Heart left ventricle (tissue), 16 donors: ENCODE measurements at regions of chr13 and their contacts with region 1.

Region 1: DNA sequence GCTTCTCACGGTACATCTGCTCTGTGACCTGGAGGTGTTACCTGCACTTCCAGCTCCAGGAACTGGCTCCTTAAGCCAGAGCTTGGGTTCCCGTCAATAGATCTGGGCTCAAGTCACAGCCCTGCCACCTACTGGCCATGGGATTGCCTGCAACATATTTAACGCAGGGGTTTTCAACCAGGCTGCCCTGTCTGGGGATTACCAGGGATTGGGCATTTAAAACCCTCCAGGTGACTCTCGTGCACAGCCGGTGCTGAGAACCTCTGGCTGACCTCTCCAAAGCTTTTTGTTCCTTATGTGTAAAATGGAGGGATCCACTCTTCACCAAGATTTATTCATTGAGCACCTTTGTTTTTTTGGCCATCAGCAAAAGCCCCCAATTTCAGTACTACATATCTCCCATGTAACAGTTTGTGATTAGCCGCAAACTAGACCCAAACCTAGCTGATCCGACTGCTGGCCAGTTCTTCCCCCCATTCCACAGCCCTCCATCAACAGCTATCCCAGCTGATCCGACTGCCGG is 76.6 kb upstream of the STK24 start:
- DNase-seq: peak; percentile 69 to 79 (median 73)
- ATAC-seq: peak; percentile 71 to 94 (median 88)
- H3K4me3 ChIP-seq: no peak overlapping the region
- H3K27ac ChIP-seq: no peak overlapping the region
- H3K4me1 ChIP-seq: peaks cover 0 to 13% (median 0%) of the 10 kb centered on the region in 12 donors
- H3K27me3 ChIP-seq: no peaks in the 10 kb centered on the region
- CTCF ChIP-seq: peak; percentile 82 to 93 (median 89)
- POLR2A ChIP-seq: no peak

Region 2: DNA sequence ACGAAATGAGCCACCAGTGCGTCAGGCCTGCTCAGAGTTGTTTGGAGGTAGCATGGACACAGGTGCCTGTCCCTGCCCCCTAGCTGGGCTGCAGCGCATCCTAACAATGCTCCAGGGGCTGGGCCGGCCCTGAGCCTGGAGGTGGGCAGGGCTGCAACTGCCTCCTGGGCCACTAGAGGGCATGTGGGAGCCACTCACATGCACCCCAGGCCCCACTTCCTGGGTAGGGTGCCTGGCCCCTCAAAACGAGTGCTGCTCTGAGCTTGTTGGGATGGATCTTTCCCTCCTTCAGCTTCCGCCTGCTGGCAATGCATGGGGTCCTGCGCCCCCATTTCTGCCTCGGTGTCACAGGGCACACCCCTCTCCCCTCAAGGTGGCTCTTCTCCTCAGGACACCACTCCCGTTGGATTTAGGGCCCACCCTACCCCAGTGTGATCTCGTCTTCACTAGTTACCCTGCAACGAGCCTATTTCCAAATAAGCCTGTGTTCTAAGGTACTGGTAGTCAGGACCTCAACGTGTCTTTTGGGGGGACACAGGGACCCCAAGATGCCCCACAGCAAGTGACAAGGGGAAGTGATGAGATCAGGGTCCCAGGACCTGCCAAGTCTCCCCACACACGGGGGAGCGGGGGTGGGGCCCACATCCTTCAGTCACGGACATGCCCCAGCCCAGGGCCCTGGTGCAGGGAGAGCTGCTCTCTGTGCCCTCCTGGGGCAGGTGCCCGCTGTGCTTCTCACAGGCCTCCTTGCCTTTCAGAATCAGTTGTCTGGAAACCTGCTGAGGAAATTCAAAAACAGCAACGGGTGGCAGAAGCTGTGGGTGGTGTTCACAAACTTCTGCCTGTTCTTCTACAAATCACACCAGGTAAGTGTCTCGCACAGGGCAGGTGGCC is 207.9 kb before region 1 on chr13:
- intact Hi-C with region 1: loop called (anchors 1 to 5 kb)
- DNase-seq: peak; percentile 58 to 88 (median 67)
- ATAC-seq: peak; percentile 62 to 88 (median 80)
- H3K4me3 ChIP-seq: no peak overlapping the region
- H3K27ac ChIP-seq: peak overlapping the region in 4 of 12 donors; percentile 5 to 67 (median 16)
- H3K4me1 ChIP-seq: peaks cover 0 to 30% (median 17%) of the 10 kb centered on the region in 12 donors
- H3K27me3 ChIP-seq: no peaks in the 10 kb centered on the region
- CTCF ChIP-seq: peak; percentile 95 to 99 (median 98)
- POLR2A ChIP-seq: no peak

Region 3: DNA sequence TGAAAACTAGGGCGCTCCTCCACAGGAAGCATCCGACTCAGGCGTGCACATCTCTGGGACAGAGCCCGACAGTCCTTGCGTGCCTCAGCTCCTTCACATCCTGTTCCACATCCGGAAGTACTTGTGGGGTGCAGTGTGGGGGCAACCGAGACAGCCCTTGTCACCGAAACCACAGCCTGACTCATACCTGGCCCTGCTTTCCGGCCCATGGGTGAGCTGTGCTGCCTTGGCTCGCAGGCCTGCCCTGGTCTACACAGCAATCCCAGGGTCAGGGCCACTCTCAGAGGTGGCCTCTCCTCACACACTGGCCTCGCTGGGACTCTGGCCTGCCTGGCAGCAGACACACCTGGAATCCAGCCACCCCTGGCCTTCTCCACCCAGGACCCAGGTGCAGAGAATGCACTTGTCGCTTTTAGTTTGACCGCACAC is 177.0 kb before region 1 on chr13:
- intact Hi-C with region 1: loop called in 2 of 10 experiments (anchors 10 kb)
- DNase-seq: peak in 3 of 5 donors; percentile 43 to 79 (median 77)
- ATAC-seq: peak; percentile 6 to 57 (median 45)
- H3K4me3 ChIP-seq: no peak overlapping the region
- H3K27ac ChIP-seq: peak overlapping the region in 7 of 12 donors; percentile 8 to 56 (median 42)
- H3K4me1 ChIP-seq: peaks cover 2 to 84% (median 61%) of the 10 kb centered on the region in 12 donors
- H3K27me3 ChIP-seq: no peaks in the 10 kb centered on the region
- CTCF ChIP-seq: no peak
- POLR2A ChIP-seq: no peak

Region 4: GRCh38 chr13:98484289-98485219 is 169.0 kb before region 1 on chr13:
- intact Hi-C with region 1: loop called in 3 of 10 experiments (anchors 5 to 10 kb)
- DNase-seq: peak in 4 of 5 donors; percentile 61 to 80 (median 69)
- ATAC-seq: peak; percentile 27 to 68 (median 60)
- H3K4me3 ChIP-seq: peak overlapping the region in 3 of 12 donors; percentile 4 to 27 (median 12)
- H3K27ac ChIP-seq: peak overlapping the region in 11 of 12 donors; percentile 42 to 83 (median 73)
- H3K4me1 ChIP-seq: peaks cover 0 to 95% (median 85%) of the 10 kb centered on the region in 12 donors
- H3K27me3 ChIP-seq: no peaks in the 10 kb centered on the region
- CTCF ChIP-seq: no peak
- POLR2A ChIP-seq: no peak

Region 5: DNA sequence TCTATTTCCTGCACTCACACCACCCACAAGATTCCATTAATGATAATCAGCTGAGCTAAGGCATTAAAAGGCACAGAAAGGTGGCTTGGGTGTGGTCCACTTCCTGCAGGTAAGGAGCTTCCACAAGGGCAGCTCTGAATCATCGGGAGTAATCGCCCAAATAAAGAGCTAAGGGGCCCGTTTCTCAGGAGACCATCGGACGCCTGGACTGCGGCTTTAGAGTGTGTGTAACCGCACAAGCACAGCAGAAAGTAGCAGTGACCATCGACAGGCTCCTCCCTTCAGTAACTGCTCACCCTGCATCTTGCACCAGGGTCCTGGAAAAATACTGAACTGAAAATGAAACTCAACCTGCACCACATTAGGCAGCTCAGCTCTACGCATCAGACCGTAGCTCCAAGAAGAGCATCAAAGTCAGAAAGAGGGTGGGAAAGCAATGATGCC is 82.6 kb before region 1 on chr13:
- intact Hi-C with region 1: loop called in 3 of 10 experiments (anchors 5 kb)
- DNase-seq: peak in 1 of 5 donors; percentile 31
- ATAC-seq: peak; percentile 13 to 47 (median 29)
- H3K4me3 ChIP-seq: peak overlapping the region in 10 of 12 donors; percentile 3 to 46 (median 28)
- H3K27ac ChIP-seq: peak overlapping the region in 11 of 12 donors; percentile 17 to 78 (median 47)
- H3K4me1 ChIP-seq: peaks cover 5 to 93% (median 68%) of the 10 kb centered on the region in 12 donors
- H3K27me3 ChIP-seq: no peaks in the 10 kb centered on the region
- CTCF ChIP-seq: no peak
- POLR2A ChIP-seq: peak in 1 of 2 donors; percentile 9

Region 6: GRCh38 chr13:98584668-98585391 is 68.7 kb before region 1 on chr13:
- intact Hi-C with region 1: loop called in 4 of 10 experiments (anchors 5 to 10 kb)
- DNase-seq: no peak
- ATAC-seq: no peak
- H3K4me3 ChIP-seq: no peak overlapping the region
- H3K27ac ChIP-seq: no peak overlapping the region
- H3K4me1 ChIP-seq: peaks cover 0 to 19% (median 7%) of the 10 kb centered on the region in 12 donors
- H3K27me3 ChIP-seq: no peaks in the 10 kb centered on the region
- CTCF ChIP-seq: no peak
- POLR2A ChIP-seq: no peak

Region 7: GRCh38 chr13:98598043-98598442 is 55.5 kb before region 1 on chr13:
- intact Hi-C with region 1: loop called in 3 of 10 experiments (anchors 5 to 10 kb)
- DNase-seq: no peak
- ATAC-seq: no peak
- H3K4me3 ChIP-seq: no peak overlapping the region
- H3K27ac ChIP-seq: no peak overlapping the region
- H3K4me1 ChIP-seq: no peaks in the 10 kb centered on the region
- H3K27me3 ChIP-seq: no peaks in the 10 kb centered on the region
- CTCF ChIP-seq: peak in 5 of 12 donors; percentile 18 to 35 (median 25)
- POLR2A ChIP-seq: no peak

Region 8: DNA sequence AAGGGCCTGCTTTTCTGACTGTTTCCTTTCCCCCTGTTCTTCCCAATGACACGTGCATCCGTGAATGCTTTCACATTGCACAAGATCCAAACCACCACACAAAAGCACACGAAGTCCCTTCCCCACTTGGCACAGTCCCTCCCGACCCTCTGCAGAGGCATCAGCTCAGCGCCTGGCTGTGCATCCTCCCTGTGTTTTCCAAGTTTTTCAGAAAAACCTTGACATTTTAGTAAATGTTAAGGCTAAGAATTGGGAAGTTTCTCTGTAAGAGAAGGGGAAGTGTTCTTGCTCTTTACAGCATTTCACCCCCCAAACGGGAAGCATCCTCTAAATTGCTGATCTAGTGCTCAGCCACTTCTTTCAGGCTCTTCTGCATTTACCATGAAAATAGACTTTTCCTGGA is 753.3 kb after region 1 on chr13:
- intact Hi-C with region 1: no loop called
- DNase-seq: no peak
- ATAC-seq: peak; percentile 29 to 67 (median 53)
- H3K4me3 ChIP-seq: no peak overlapping the region
- H3K27ac ChIP-seq: peak overlapping the region in 1 of 12 donors; percentile 89
- H3K4me1 ChIP-seq: peaks cover 0 to 23% (median 0%) of the 10 kb centered on the region in 12 donors
- H3K27me3 ChIP-seq: no peaks in the 10 kb centered on the region
- CTCF ChIP-seq: no peak
- POLR2A ChIP-seq: no peak

Region 9: GRCh38 chr13:99590519-99591011 is 937.0 kb after region 1 on chr13:
- intact Hi-C with region 1: no loop called
- DNase-seq: no peak
- ATAC-seq: peak in 3 of 4 donors; percentile 33 to 52 (median 44)
- H3K4me3 ChIP-seq: no peak overlapping the region
- H3K27ac ChIP-seq: peak overlapping the region in 4 of 12 donors; percentile 11 to 61 (median 44)
- H3K4me1 ChIP-seq: peaks cover 0 to 17% (median 7%) of the 10 kb centered on the region in 12 donors
- H3K27me3 ChIP-seq: no peaks in the 10 kb centered on the region
- CTCF ChIP-seq: no peak
- POLR2A ChIP-seq: no peak